Activated CD8-positive, alpha-beta T cell treated with anti-CD3 and anti-CD28 coated beads, Interleukin-2, amount 10 ng/mL, durations not matched to agents 7 days and 5 days (primary cell): ENCODE measurements at regions of chr1 and their contacts with region 1.

Region 1: GRCh38 chr1:36134505-36135329 is 9.7 kb upstream of the COL8A2 start:
- DNase-seq: peak; percentile 66
- ATAC-seq: peak; percentile 78
- H3K4me3 Mint-ChIP-seq: no peak overlapping the region
- H3K27ac Mint-ChIP-seq: peak overlapping the region; percentile 9
- H3K4me1 Mint-ChIP-seq: peaks cover 9% of the 10 kb centered on the region
- H3K27me3 Mint-ChIP-seq: no peaks in the 10 kb centered on the region

Region 2: GRCh38 chr1:36099681-36100341 is 34.9 kb before region 1 on chr1:
- CTCF ChIA-PET with region 1: interaction called, 349 read pairs
- POLR2A ChIA-PET with region 1: interaction called, 5 read pairs
- DNase-seq: peak; percentile 83
- ATAC-seq: peak; percentile 93
- H3K4me3 Mint-ChIP-seq: no peak overlapping the region
- H3K27ac Mint-ChIP-seq: no peak overlapping the region
- H3K4me1 Mint-ChIP-seq: peaks cover 10% of the 10 kb centered on the region
- H3K27me3 Mint-ChIP-seq: no peaks in the 10 kb centered on the region

Region 3: DNA sequence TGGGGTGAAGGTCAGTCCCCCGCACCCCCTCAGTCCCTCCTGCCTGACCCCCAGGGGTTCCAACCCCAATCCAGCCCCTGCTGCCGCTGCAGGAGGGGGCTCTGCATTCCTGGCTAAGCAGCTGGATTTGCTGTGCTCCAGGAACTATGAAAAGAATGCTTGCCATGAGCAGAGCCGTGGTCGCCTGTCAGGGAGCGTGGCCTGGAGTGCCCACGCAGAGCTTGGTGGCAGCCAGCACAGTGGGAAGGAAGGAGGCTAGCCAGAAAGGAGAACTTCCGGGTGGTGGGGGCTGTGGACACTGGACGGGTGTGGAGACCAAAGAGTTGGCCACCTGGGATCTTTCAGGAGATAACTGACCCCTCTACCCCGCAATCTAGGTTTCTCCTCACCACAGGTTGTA is 15.3 kb before region 1 on chr1:
- CTCF ChIA-PET with region 1: interaction called, 39 read pairs
- POLR2A ChIA-PET with region 1: interaction called, 5 read pairs
- DNase-seq: no peak
- ATAC-seq: no peak
- H3K4me3 Mint-ChIP-seq: no peak overlapping the region
- H3K27ac Mint-ChIP-seq: no peak overlapping the region
- H3K4me1 Mint-ChIP-seq: peaks cover 11% of the 10 kb centered on the region
- H3K27me3 Mint-ChIP-seq: peaks cover 27% of the 10 kb centered on the region

Region 4: GRCh38 chr1:36257375-36257767 is 122.7 kb after region 1 on chr1:
- CTCF ChIA-PET with region 1: no interaction called
- POLR2A ChIA-PET with region 1: no interaction called
- DNase-seq: no peak
- ATAC-seq: no peak
- H3K4me3 Mint-ChIP-seq: no peak overlapping the region
- H3K27ac Mint-ChIP-seq: no peak overlapping the region
- H3K4me1 Mint-ChIP-seq: peaks cover 16% of the 10 kb centered on the region
- H3K27me3 Mint-ChIP-seq: no peaks in the 10 kb centered on the region